Breast epithelium (tissue), 4 donors: ENCODE measurements at regions of chr4 and their contacts with region 1.

Region 1: GRCh38 chr4:173009129-173009823 is 159.3 kb upstream of the GALNT7 start:
- DNase-seq: no peak
- H3K4me3 ChIP-seq: no peak overlapping the region
- H3K27ac ChIP-seq: no peak overlapping the region
- H3K4me1 ChIP-seq: no peaks in the 10 kb centered on the region
- H3K27me3 ChIP-seq: no peaks in the 10 kb centered on the region
- CTCF ChIP-seq: no peak
- POLR2A ChIP-seq: no peak

Region 2: DNA sequence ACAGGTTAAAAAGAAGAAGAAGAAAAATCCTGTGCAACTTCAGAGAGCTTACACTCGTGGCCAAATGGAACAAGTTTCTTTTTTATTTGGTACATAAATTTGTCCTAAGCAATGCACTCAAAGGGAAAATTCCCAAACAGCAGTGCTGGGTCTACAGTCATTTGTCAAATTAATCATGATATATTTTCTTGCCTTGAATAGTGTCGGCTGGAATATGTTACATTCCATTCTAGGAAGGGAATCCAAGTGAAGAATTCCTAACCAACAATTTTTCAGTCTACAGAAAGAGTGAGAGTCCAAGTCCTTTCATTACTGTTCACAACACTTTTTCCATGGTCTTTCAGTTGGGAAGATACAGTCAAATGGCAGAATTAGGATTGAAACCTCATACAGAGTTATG is 456.8 kb after region 1 on chr4:
- intact Hi-C with region 1: no loop called
- DNase-seq: no peak
- H3K4me3 ChIP-seq: no peak overlapping the region
- H3K27ac ChIP-seq: no peak overlapping the region
- H3K4me1 ChIP-seq: no peaks in the 10 kb centered on the region
- H3K27me3 ChIP-seq: no peaks in the 10 kb centered on the region
- CTCF ChIP-seq: no peak
- POLR2A ChIP-seq: no peak

Region 3: DNA sequence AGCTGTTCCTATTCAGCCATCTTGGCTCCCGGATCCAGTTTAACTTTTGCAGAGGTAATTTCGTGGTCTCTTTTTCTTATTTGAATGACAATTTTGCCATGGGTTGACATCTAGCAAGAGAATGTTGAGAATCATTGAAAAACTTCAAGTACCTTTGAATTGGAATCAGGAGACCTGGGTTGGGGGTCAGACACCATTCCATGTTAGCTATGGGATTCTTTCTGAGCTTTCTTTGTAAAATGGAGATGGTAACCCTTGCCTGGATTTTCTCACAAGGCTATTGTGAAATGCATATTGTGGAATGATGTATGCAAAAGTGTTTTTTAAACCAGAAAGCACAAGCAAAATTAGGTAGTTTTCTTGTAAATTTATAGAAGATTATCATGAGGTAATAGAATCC is 599.9 kb after region 1 on chr4:
- intact Hi-C with region 1: no loop called
- DNase-seq: no peak
- H3K4me3 ChIP-seq: no peak overlapping the region
- H3K27ac ChIP-seq: no peak overlapping the region
- H3K4me1 ChIP-seq: no peaks in the 10 kb centered on the region
- H3K27me3 ChIP-seq: no peaks in the 10 kb centered on the region
- CTCF ChIP-seq: no peak
- POLR2A ChIP-seq: no peak

Region 4: DNA sequence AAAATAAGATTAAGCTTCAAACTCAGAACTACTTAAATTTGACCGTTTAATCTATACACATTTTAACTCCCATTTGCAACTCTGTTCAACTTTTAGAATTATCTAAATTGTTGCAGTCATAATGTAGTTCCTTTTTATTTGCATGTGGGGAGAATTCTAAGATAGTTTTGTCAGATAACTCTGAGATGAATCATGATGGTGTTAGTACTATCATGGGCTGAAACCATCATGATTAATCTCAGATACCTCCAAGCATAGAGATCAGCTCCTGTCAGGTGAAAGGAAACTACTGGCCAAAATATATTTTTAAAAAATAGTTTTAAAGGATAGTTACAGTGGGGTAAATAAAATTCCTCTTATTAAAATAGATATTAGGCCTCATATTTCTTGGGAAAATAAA is 1235.2 kb after region 1 on chr4:
- intact Hi-C with region 1: loop called (anchors 10 kb)
- DNase-seq: no peak
- H3K4me3 ChIP-seq: no peak overlapping the region
- H3K27ac ChIP-seq: no peak overlapping the region
- H3K4me1 ChIP-seq: no peaks in the 10 kb centered on the region
- H3K27me3 ChIP-seq: no peaks in the 10 kb centered on the region
- CTCF ChIP-seq: no peak
- POLR2A ChIP-seq: no peak